ENCODE measurements at regions of chr19 and their contacts with region 1.

Region 1: GRCh38 chr19:20247016-20247683 is 80.1 kb downstream of the ZNF486 start:
- DNase-seq: peak; percentile 62
- H3K4me3 ChIP-seq: no peak overlapping the region; a peak in 1 of 4 replicates
- H3K27ac ChIP-seq: no peak overlapping the region
- H3K4me1 ChIP-seq: peaks cover 0 to 10% of the 10 kb centered on the region in 2 experiments; a peak in 1 of 4 replicates
- H3K27me3 ChIP-seq: no peaks in the 10 kb centered on the region
- CTCF ChIP-seq: peak; percentile 30
- EP300 ChIP-seq: no peak
- RAD21 ChIP-seq: peak; percentile 94

Region 2: DNA sequence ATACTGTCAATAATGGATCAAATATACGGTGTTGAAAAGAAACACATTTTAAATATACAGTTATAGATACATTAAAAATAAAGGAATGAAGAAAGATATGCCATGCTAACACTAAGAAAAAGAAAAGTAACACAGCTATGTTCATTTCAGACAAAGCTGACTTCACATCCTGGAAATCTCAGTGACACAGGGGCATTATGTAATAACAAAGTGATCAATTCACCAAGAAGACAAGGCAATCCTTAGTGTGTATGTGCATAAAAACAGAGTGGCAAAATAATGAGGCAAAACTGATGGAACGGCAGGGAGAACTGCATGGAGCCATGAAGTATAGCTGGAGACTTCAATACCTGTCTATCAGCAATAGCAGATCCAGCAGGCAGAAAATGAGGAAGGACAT is 527.4 kb before region 1 on chr19:
- CTCF ChIA-PET with region 1: no interaction called
- POLR2A ChIA-PET with region 1: no interaction called
- DNase-seq: no peak
- H3K4me3 ChIP-seq: no peak overlapping the region
- H3K27ac ChIP-seq: no peak overlapping the region
- H3K4me1 ChIP-seq: no peaks in the 10 kb centered on the region
- H3K27me3 ChIP-seq: no peaks in the 10 kb centered on the region
- CTCF ChIP-seq: no peak
- EP300 ChIP-seq: no peak
- RAD21 ChIP-seq: no peak

Region 3: GRCh38 chr19:20107301-20107700 is 139.8 kb before region 1 on chr19:
- CTCF ChIA-PET with region 1: no interaction called
- POLR2A ChIA-PET with region 1: no interaction called
- DNase-seq: no peak
- H3K4me3 ChIP-seq: no peak overlapping the region
- H3K27ac ChIP-seq: no peak overlapping the region
- H3K4me1 ChIP-seq: no peaks in the 10 kb centered on the region
- H3K27me3 ChIP-seq: no peaks in the 10 kb centered on the region
- CTCF ChIP-seq: no peak
- EP300 ChIP-seq: no peak
- RAD21 ChIP-seq: no peak

Region 4: DNA sequence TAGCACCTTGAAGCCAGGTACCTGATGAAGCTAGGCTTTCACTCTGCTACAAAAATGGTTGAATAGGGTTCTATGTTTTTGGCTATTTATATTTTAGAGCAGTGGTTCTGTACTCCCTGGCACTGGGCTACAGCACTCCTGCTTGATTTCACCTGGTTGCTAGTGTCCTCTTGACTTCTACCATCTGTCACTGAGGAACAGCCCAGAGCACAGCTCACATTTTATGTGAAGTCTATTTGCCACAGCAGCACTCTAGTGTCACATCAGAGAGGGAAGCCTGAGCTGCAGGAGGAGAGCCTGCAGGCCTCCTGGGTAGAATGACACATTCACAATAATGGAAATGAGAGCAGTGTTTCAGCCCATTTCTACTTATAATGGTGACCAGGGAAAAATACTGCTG is 104.1 kb after region 1 on chr19:
- CTCF ChIA-PET with region 1: interaction called, 10 read pairs
- POLR2A ChIA-PET with region 1: no interaction called
- DNase-seq: no peak
- H3K4me3 ChIP-seq: no peak overlapping the region
- H3K27ac ChIP-seq: no peak overlapping the region
- H3K4me1 ChIP-seq: peaks cover 0 to 2% of the 10 kb centered on the region in 2 experiments; a peak in 1 of 4 replicates
- H3K27me3 ChIP-seq: no peaks in the 10 kb centered on the region
- CTCF ChIP-seq: no peak
- EP300 ChIP-seq: no peak
- RAD21 ChIP-seq: no peak

Region 5: GRCh38 chr19:20359933-20360720 is 113.0 kb after region 1 on chr19:
- CTCF ChIA-PET with region 1: interaction called, 41 read pairs
- POLR2A ChIA-PET with region 1: interaction called, 5 read pairs
- DNase-seq: peak; percentile 57
- H3K4me3 ChIP-seq: no peak overlapping the region
- H3K27ac ChIP-seq: no peak overlapping the region
- H3K4me1 ChIP-seq: peaks cover 0 to 4% of the 10 kb centered on the region in 2 experiments; a peak in 1 of 4 replicates
- H3K27me3 ChIP-seq: no peaks in the 10 kb centered on the region
- CTCF ChIP-seq: 0 out of 2 replicates have a peak, but pooled peaks have one; percentile 7
- EP300 ChIP-seq: no peak
- RAD21 ChIP-seq: peak; percentile 76

Region 6: DNA sequence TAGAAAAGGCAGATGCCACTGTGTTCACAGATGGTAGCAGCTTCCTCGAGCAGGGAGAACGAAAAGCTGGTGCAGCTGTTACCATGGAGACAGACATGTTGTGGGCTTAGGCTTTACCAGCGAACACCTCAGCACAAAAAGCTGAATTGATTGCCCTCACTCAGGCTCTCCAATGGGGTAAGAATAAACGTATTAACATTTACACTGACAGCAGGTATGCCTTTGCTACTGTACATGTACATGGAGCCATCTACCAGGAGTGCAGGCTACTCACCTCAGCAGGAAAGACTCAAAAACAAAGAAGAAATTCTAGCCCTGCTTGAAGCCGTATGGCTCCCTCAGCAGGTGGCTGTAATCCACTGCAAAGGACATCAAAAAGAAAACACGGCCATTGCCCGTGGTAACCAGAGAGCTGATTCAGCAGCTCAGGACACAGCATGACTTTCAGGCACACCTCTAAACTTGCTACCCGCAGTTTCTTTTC is 120.7 kb after region 1 on chr19:
- CTCF ChIA-PET with region 1: interaction called, 34 read pairs
- POLR2A ChIA-PET with region 1: no interaction called
- DNase-seq: no peak
- H3K4me3 ChIP-seq: no peak overlapping the region
- H3K27ac ChIP-seq: no peak overlapping the region
- H3K4me1 ChIP-seq: no peaks in the 10 kb centered on the region; a peak in 1 of 4 replicates
- H3K27me3 ChIP-seq: no peaks in the 10 kb centered on the region
- CTCF ChIP-seq: no peak
- EP300 ChIP-seq: no peak
- RAD21 ChIP-seq: no peak; the same call in 1 of the 2 replicates

Region 7: GRCh38 chr19:20423381-20424197 is 176.4 kb after region 1 on chr19:
- CTCF ChIA-PET with region 1: interaction called, 10 read pairs
- POLR2A ChIA-PET with region 1: no interaction called
- DNase-seq: peak; percentile 15
- H3K4me3 ChIP-seq: peak overlapping the region; percentile 54 to 58
- H3K27ac ChIP-seq: peak overlapping the region; percentile 42 to 67
- H3K4me1 ChIP-seq: no peaks in the 10 kb centered on the region
- H3K27me3 ChIP-seq: no peaks in the 10 kb centered on the region
- CTCF ChIP-seq: no peak
- EP300 ChIP-seq: no peak
- RAD21 ChIP-seq: no peak

Region 8: GRCh38 chr19:20513179-20513934 is 266.2 kb after region 1 on chr19:
- CTCF ChIA-PET with region 1: interaction called, 10 read pairs
- POLR2A ChIA-PET with region 1: no interaction called
- DNase-seq: no peak
- H3K4me3 ChIP-seq: no peak overlapping the region
- H3K27ac ChIP-seq: no peak overlapping the region
- H3K4me1 ChIP-seq: no peaks in the 10 kb centered on the region
- H3K27me3 ChIP-seq: no peaks in the 10 kb centered on the region
- CTCF ChIP-seq: no peak
- EP300 ChIP-seq: no peak
- RAD21 ChIP-seq: no peak

Measured in SK-N-SH (cell line).